Mammary epithelial cell (primary cell): ENCODE measurements at regions of chr6 and their contacts with region 1.

Region 1: GRCh38 chr6:158972241-158973233 is 27.5 kb downstream of the RSPH3 start:
- DNase-seq: peak; percentile 50
- H3K4me3 ChIP-seq: no peak overlapping the region
- H3K27ac ChIP-seq: peak overlapping the region; percentile 49
- H3K4me1 ChIP-seq: no peaks in the 10 kb centered on the region
- H3K27me3 ChIP-seq: no peaks in the 10 kb centered on the region
- CTCF ChIP-seq: peak; percentile 39 to 43

Region 2: DNA sequence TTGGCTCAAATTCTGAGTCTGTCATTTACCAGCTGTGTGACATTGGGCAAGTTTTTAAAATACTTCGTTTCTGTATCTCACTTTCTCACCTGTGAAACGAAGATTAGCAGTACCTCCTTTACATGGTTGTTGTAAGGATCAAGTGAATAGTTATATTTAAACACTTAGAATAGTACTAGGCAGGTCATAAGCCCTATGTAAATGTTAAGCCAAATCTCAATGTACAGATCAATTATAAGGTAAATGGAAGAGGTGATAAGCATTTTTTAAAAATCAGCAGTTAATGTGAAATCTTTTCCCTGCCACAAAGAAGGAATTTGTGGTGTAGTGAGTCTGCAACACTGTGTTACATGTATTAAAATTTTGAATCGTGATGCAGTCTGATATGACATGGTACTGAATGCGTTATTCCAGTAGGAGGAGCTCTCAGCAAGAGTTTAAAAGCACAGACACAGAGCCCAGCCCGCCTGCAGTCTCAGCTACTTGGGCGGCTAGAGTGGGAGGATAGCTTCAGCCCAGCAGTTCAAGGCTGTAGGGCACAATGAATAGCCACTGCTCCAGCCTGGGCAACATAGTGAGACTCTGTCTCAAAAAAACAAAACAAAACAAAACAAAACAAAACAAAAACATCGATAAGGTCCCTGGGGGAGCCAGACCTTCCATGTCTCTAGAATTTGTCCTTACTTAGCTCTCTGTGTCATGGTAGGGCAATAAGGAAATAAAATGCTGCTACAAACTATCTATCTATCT is 758.4 kb before region 1 on chr6:
- CTCF ChIA-PET with region 1: no interaction called
- dilution Hi-C with region 1: no loop called
- in situ Hi-C with region 1: loop called in 1 of 2 experiments (anchors 25 kb)
- intact Hi-C with region 1: loop called (anchors 1 kb)
- DNase-seq: peak; percentile 65
- H3K4me3 ChIP-seq: no peak overlapping the region
- H3K27ac ChIP-seq: no peak overlapping the region
- H3K4me1 ChIP-seq: peaks cover 14% of the 10 kb centered on the region
- H3K27me3 ChIP-seq: no peaks in the 10 kb centered on the region
- CTCF ChIP-seq: peak; percentile 77 to 91

Region 3: GRCh38 chr6:158784505-158784904 is 188.0 kb before region 1 on chr6:
- CTCF ChIA-PET with region 1: no interaction called
- dilution Hi-C with region 1: loop called (anchors 5 kb)
- in situ Hi-C with region 1: loop called in 1 of 2 experiments (anchors 10 kb)
- intact Hi-C with region 1: no loop called
- DNase-seq: peak; percentile 83
- H3K4me3 ChIP-seq: no peak overlapping the region
- H3K27ac ChIP-seq: peak overlapping the region; percentile 52
- H3K4me1 ChIP-seq: peaks cover 67% of the 10 kb centered on the region
- H3K27me3 ChIP-seq: no peaks in the 10 kb centered on the region
- CTCF ChIP-seq: no peak

Region 4: DNA sequence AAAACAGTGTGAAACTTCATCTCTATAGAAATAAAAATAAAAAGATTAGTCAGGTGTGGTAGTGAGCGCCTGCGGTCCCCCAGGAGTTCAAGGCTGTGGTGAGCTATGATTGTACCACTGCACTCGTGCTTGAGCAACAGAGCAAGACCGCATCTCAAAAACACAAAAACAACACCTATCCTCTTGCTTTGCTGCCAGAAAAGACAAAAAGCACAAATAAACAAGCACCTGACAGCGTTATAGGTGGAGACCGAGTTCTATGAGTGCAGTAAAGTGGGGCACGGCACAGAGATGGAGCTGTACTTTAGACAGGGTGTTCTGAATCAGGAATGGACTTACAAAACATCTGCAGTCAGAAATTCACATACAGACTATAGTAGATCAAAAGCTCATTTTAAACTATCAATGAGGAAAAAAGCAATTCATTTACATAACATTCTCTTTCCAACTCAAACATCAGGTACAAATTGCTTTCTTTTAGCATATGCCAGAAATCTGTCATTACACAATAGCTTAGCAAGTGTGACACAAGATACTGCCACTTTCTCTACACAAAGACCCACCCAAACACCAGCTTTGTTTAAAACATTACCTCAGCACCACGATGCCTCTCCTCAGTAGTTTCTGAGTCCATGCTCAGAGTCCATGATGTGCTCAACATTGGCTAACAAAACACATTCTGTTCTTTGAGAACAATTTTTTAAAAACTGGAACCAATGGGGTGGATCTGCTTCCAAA is 163.4 kb before region 1 on chr6:
- CTCF ChIA-PET with region 1: no interaction called
- dilution Hi-C with region 1: no loop called
- in situ Hi-C with region 1: no loop called
- intact Hi-C with region 1: loop called (anchors 2 kb)
- DNase-seq: no peak
- H3K4me3 ChIP-seq: no peak overlapping the region
- H3K27ac ChIP-seq: peak overlapping the region; percentile 19
- H3K4me1 ChIP-seq: peaks cover 58% of the 10 kb centered on the region
- H3K27me3 ChIP-seq: no peaks in the 10 kb centered on the region
- CTCF ChIP-seq: no peak

Region 5: DNA sequence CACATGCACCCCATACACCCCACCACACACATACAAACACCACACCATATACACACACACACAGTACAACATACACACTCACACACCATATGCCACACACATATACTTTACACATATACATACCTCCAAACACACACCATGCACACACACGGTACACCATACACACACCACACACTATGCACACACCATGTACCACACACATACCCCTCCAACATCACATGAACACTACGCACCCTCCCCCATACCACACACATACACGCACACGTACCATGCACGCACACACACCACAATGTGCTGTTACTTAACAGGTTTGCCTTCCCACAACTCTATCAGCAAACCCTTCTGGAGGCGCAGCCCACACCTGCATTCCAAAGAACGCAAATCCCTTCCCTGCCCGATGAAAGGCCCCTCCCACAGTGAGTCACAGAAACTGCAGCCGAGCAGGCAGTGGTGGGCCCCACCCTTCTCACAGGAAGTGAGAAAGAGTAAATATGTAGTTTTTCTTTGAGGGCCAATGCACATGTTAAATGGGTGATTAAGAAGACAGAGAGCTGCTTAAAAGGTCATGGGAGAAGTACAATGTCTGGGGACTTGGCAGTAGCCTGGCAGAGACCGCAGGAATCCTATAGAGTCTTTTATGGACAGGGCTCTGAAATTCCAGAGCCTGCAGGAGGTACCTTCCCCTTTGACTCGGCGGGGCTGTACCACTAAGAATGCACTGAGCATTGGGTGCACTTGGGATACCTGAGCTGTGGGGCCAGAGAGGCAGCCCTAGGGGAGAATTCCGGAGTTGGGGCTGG is 119.3 kb before region 1 on chr6:
- CTCF ChIA-PET with region 1: no interaction called
- dilution Hi-C with region 1: no loop called
- in situ Hi-C with region 1: no loop called
- intact Hi-C with region 1: loop called (anchors 1 kb)
- DNase-seq: peak; percentile 100
- H3K4me3 ChIP-seq: no peak overlapping the region
- H3K27ac ChIP-seq: peak overlapping the region; percentile 95
- H3K4me1 ChIP-seq: peaks cover 57% of the 10 kb centered on the region
- H3K27me3 ChIP-seq: no peaks in the 10 kb centered on the region
- CTCF ChIP-seq: no peak

Region 6: DNA sequence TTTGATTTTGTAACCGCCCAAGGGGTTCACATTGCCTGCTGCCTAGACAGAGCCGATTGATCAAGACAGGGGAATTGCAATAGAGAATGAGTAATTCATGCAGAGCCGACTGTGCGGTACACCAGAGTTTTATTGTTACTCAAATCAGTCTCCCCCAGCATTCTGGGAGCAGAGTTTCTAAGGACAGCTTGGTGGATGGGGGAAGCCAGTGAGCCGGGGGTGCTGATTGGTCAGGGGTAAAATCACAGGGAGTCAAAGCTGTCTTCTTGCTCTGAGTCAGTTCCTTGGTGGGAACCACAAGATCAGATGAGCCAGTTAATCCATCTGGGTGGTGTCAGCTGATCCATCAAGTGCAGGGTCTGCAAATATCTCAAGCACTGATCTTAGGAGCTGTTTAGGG is 93.4 kb before region 1 on chr6:
- CTCF ChIA-PET with region 1: no interaction called
- dilution Hi-C with region 1: loop called (anchors 5 kb)
- in situ Hi-C with region 1: no loop called
- intact Hi-C with region 1: no loop called
- DNase-seq: peak; percentile 32
- H3K4me3 ChIP-seq: no peak overlapping the region
- H3K27ac ChIP-seq: no peak overlapping the region
- H3K4me1 ChIP-seq: peaks cover 2% of the 10 kb centered on the region
- H3K27me3 ChIP-seq: no peaks in the 10 kb centered on the region
- CTCF ChIP-seq: no peak